ENCODE measurements at regions of chr1 and their contacts with region 1.

Region 1: GRCh38 chr1:20521960-20522861 is 14.3 kb upstream of the MUL1 start:
- DNase-seq: peak in 1 of 2 donors; percentile 89
- H3K4me3 ChIP-seq: peak overlapping the region; percentile 3 to 30
- H3K27ac ChIP-seq: no peak overlapping the region
- H3K4me1 ChIP-seq: no peaks in the 10 kb centered on the region
- H3K27me3 ChIP-seq: no peaks in the 10 kb centered on the region
- CTCF ChIP-seq: peak; percentile 90 to 94 (median 93)

Region 2: GRCh38 chr1:20661207-20662109 is 139.2 kb after region 1 on chr1 and contains the start of gene DDOST:
- intact Hi-C with region 1: loop called (anchors 1 kb)
- DNase-seq: peak; percentile 82 to 98
- H3K4me3 ChIP-seq: peak within 1 kb of the TSS; percentile 83 to 87
- H3K27ac ChIP-seq: peak within 1 kb of the TSS; percentile 89 to 90
- H3K4me1 ChIP-seq: peaks cover 6 to 18% of the 10 kb centered on the region in 2 donors
- H3K27me3 ChIP-seq: no peaks in the 10 kb centered on the region
- CTCF ChIP-seq: peak in 2 of 3 experiments; percentile 47 to 48
- total RNA-seq, gene DDOST: 142 TPM

Region 3: GRCh38 chr1:20867847-20868246 is 345.6 kb after region 1 on chr1:
- intact Hi-C with region 1: no loop called
- DNase-seq: no peak
- H3K4me3 ChIP-seq: no peak overlapping the region
- H3K27ac ChIP-seq: no peak overlapping the region
- H3K4me1 ChIP-seq: no peaks in the 10 kb centered on the region
- H3K27me3 ChIP-seq: no peaks in the 10 kb centered on the region
- CTCF ChIP-seq: no peak

Measured in ascending aorta (tissue), 2 donors.